ENCODE measurements at regions of chr1 and their contacts with region 1.

Region 1: DNA sequence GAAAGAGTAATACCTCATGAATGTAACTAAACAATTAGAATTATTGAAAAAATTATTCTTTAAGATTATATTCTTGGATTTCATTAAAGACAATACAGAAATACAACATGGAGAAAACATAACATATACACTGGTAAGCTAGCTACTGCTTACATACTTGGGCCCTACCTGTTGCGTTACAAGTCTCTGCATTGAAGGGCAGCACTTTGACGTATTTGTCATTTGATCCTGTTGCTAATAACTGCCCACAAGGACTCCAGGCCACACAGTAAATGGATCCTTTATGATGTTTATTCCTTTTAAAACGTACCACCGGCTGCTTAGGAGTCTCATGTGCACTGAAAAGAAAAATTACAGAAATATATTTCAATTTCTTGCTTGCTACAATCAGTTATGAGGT is 19.8 kb upstream of the CLCC1 start:
- DNase-seq: peak in 1 of 2 experiments; percentile 26
- H3K4me3 ChIP-seq: no peak overlapping the region
- H3K27ac ChIP-seq: no peak overlapping the region
- H3K4me1 ChIP-seq: no peaks in the 10 kb centered on the region
- H3K27me3 ChIP-seq: no peaks in the 10 kb centered on the region
- CTCF ChIP-seq: no peak

Region 2: GRCh38 chr1:109027841-109028240 is 44.7 kb after region 1 on chr1:
- CTCF ChIA-PET with region 1: interaction called, 17 read pairs
- POLR2A ChIA-PET with region 1: no interaction called
- intact Hi-C with region 1: no loop called
- DNase-seq: no peak
- H3K4me3 ChIP-seq: no peak overlapping the region
- H3K27ac ChIP-seq: no peak overlapping the region
- H3K4me1 ChIP-seq: no peaks in the 10 kb centered on the region
- H3K27me3 ChIP-seq: no peaks in the 10 kb centered on the region
- CTCF ChIP-seq: peak; percentile 60; the same call in 1 of the 2 replicates

Measured in PC-9 (cell line).